CD4-positive, alpha-beta memory T cell (primary cell): ENCODE measurements at regions of chr4 and their contacts with region 1.

Region 1: DNA sequence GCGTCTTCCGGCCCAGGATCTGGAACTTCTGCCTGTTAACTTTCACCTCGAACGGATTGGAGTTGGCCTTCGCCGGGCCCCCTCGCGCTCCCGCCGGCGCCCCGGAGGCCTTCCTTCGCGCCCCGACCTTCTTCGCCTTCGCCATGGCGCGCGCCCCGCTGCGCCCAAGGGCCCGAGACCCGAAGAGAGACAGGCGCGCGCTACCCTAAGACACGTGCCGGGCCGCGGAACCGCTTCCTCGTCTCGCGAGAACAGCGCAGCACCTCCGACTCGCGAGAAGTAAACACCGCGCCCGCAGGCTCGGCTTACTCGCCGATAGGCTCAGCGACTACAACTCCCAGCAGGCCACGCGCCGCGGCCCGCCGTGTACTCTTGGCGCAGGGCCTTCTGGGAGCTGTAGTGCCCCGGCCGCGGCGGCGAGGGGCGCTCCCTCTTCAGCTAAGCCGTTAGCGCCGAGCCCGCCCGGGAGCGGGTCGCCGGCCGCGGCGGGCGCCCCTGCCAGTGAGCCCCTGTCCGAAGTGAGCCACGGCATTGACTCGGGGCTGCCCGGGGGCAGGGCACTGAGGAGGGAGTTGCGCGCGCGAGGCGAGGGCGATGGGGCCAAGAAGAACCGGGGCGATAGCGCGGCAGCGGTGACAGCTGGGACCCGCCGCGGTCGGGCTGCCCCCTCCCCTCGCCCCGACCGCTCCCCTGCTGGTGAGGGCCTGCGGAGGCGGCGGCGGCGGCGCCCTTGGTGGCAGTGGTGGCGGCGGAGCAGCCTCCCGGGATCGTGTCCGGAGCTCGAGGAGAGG is at the starts of genes GRK4 and NOP14:
- DNase-seq: peak; percentile 95 to 98 (median 98)
- H3K4me3 ChIP-seq: peak within 1 kb of the TSS; percentile 39 to 68
- H3K4me3 Mint-ChIP-seq: peak within 1 kb of the TSS; percentile 78 to 93 (median 91)
- H3K27ac ChIP-seq: peak within 1 kb of the TSS; percentile 83
- H3K27ac Mint-ChIP-seq: peak within 1 kb of the TSS; percentile 91 to 95 (median 93)
- H3K4me1 ChIP-seq: peaks cover 42% of the 10 kb centered on the region
- H3K4me1 Mint-ChIP-seq: peaks cover 28 to 54% (median 36%) of the 10 kb centered on the region in 4 donors
- H3K27me3 ChIP-seq: no peaks in the 10 kb centered on the region
- H3K27me3 Mint-ChIP-seq: no peaks in the 10 kb centered on the region
- total RNA-seq, gene GRK4: 2.8 to 3.2 TPM
- total RNA-seq, gene NOP14: 41.3 to 41.4 TPM

Region 2: GRCh38 chr4:1712216-1713002 is 1251.0 kb before region 1 on chr4 and contains the start of gene SLBP:
- CTCF ChIA-PET with region 1: no interaction called
- POLR2A ChIA-PET with region 1: no interaction called
- intact Hi-C with region 1: loop called (anchors 5 kb)
- DNase-seq: peak; percentile 98 to 99 (median 99)
- H3K4me3 ChIP-seq: peak within 1 kb of the TSS; percentile 62 to 99
- H3K4me3 Mint-ChIP-seq: peak within 1 kb of the TSS; percentile 95 to 99 (median 98)
- H3K27ac ChIP-seq: peak within 1 kb of the TSS; percentile 92
- H3K27ac Mint-ChIP-seq: peak within 1 kb of the TSS; percentile 95 to 98 (median 97)
- H3K4me1 ChIP-seq: peaks cover 67% of the 10 kb centered on the region
- H3K4me1 Mint-ChIP-seq: peaks cover 31 to 74% (median 53%) of the 10 kb centered on the region in 4 donors
- H3K27me3 ChIP-seq: no peaks in the 10 kb centered on the region
- H3K27me3 Mint-ChIP-seq: no peaks in the 10 kb centered on the region
- total RNA-seq, gene SLBP: 41.8 to 47.4 TPM

Region 3: DNA sequence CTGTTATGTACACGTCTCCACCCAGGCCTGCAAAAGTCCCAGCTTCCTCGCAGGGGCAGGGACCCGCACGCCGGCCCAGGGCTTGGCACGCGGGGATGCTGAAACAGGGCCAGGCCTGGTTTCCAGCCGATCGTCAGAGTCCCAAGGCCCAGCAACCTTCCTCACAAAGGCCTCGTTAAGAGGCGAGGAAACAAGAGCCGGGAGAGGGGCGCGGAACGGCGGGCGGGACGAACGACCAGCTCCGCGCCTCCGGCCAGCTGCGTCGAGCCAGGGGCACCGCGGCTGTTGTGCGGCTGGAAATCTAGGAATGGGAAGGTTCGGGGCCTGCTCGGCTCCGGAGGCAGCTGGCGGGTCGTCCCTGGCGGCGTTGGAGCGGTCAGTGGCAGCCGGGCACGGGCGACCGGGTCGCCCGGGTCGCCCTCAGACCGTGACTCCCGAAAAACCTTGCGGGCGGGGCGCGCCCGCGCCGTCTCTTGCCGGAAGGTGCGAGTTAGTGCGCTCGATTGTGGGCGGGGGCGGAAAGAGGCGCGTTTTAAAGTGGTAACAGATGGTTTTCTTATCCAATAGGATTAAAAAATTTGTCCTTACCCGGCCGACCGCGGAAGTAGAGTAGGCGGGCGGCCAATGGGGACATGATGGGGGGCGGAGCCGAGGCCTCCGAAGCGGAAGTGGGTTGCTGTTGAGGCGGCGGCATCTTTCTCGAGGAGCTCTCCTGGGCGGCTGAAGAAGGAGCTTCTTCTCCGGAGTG is 494.8 kb before region 1 on chr4 and contains the start of gene RNF4:
- CTCF ChIA-PET with region 1: no interaction called
- POLR2A ChIA-PET with region 1: interaction called, 6 read pairs
- intact Hi-C with region 1: loop called (anchors 2 kb)
- DNase-seq: peak; percentile 94 to 98 (median 97)
- H3K4me3 ChIP-seq: peak within 1 kb of the TSS; percentile 67 to 84
- H3K4me3 Mint-ChIP-seq: peak within 1 kb of the TSS; percentile 95 to 98 (median 95)
- H3K27ac ChIP-seq: peak within 1 kb of the TSS; percentile 98
- H3K27ac Mint-ChIP-seq: peak within 1 kb of the TSS; percentile 96 to 99 (median 98)
- H3K4me1 ChIP-seq: peaks cover 52% of the 10 kb centered on the region
- H3K4me1 Mint-ChIP-seq: peaks cover 28 to 62% (median 41%) of the 10 kb centered on the region in 4 donors
- H3K27me3 ChIP-seq: no peaks in the 10 kb centered on the region
- H3K27me3 Mint-ChIP-seq: no peaks in the 10 kb centered on the region
- total RNA-seq, gene RNF4: 94.0 to 104 TPM

Region 4: GRCh38 chr4:2702361-2702760 is 261.0 kb before region 1 on chr4:
- CTCF ChIA-PET with region 1: no interaction called
- POLR2A ChIA-PET with region 1: no interaction called
- intact Hi-C with region 1: no loop called
- DNase-seq: no peak
- H3K4me3 ChIP-seq: no peak overlapping the region
- H3K4me3 Mint-ChIP-seq: no peak overlapping the region
- H3K27ac ChIP-seq: no peak overlapping the region
- H3K27ac Mint-ChIP-seq: peak overlapping the region in 2 of 7 donors; percentile 26 to 30
- H3K4me1 ChIP-seq: no peaks in the 10 kb centered on the region
- H3K4me1 Mint-ChIP-seq: no peaks in the 10 kb centered on the region
- H3K27me3 ChIP-seq: no peaks in the 10 kb centered on the region
- H3K27me3 Mint-ChIP-seq: no peaks in the 10 kb centered on the region

Region 5: DNA sequence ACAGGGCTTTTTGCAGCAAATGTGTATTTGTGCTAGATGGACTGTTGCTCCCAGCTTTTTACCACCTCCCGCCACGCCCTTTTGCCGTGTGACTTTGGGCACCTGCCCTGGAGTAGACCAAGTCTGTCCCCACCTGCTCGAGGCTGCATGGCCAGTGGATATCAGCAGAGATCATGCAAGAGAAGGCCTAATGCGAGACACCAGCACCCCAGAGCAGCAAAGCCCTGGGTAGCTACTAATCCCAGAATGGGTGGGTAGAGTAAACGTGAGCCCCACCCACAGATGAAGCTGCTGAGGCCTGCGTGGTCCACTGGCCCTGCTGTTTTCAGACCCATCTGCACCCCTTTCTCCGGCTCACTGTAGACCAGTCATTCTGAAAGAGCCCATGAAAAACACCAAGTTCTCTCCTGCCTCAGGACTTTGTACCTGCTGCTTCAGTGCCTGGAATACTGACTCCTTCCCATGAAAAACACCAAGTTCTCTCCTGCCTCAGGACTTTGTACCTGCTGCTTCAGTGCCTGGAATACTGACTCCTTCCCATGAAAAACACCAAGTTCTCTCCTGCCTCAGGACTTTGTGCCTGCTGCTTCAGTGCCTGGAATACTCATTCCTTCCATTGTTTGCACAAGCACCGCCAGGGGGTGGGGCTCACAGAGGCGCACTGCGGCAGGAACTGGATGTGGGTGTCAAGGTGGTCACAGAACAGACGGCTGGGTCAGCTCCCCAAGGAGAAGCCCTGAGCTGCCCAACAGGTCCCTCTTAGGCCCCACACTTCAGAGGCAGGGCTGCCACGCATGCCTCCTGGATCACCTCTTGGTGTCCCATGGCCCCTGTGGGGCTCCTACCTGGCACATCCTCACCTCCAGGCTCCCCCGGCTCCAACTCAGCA is 202.1 kb before region 1 on chr4:
- CTCF ChIA-PET with region 1: interaction called, 12 read pairs
- POLR2A ChIA-PET with region 1: interaction called, 7 read pairs
- intact Hi-C with region 1: loop called (anchors 2 kb)
- DNase-seq: no peak
- H3K4me3 ChIP-seq: no peak overlapping the region
- H3K4me3 Mint-ChIP-seq: peak overlapping the region in 1 of 8 donors; percentile 17
- H3K27ac ChIP-seq: no peak overlapping the region
- H3K27ac Mint-ChIP-seq: peak overlapping the region in 3 of 7 donors; percentile 37 to 80 (median 60)
- H3K4me1 ChIP-seq: peaks cover 14% of the 10 kb centered on the region
- H3K4me1 Mint-ChIP-seq: peaks cover 0 to 21% (median 9%) of the 10 kb centered on the region in 4 donors
- H3K27me3 ChIP-seq: no peaks in the 10 kb centered on the region
- H3K27me3 Mint-ChIP-seq: no peaks in the 10 kb centered on the region

Region 6: DNA sequence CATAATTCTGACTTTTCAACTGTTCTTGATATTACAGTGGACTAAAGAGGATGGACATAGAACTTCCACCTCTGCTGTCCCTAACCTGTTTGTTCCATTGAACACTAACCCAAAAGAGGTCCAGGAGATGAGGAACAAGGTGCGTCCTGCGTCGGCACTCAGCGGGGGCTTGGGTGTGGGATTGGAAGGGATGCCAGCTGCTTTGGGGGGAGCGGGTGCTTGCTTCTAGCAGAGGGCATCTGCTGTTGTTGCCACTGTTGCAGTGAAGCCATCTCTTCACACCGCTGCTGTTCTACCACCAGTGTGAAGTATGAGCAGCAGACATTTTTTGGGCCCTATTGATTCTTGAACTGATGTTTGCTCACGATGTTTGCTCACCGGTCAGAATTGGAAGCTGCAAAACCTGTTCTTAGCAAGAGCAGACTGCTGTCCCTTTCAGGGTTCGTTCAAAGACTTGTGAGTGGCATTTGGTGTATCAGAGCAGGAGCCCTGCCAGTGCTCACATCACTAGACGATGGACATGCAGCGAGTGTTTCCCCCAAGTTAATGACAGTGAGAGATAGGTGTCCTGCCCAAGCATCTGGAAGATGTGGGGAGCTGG is 55.6 kb before region 1 on chr4:
- CTCF ChIA-PET with region 1: no interaction called
- POLR2A ChIA-PET with region 1: no interaction called
- intact Hi-C with region 1: no loop called
- DNase-seq: no peak
- H3K4me3 ChIP-seq: no peak overlapping the region
- H3K4me3 Mint-ChIP-seq: no peak overlapping the region
- H3K27ac ChIP-seq: no peak overlapping the region
- H3K27ac Mint-ChIP-seq: peak overlapping the region in 4 of 7 donors; percentile 22 to 87 (median 68)
- H3K4me1 ChIP-seq: peaks cover 23% of the 10 kb centered on the region
- H3K4me1 Mint-ChIP-seq: peaks cover 12 to 30% (median 16%) of the 10 kb centered on the region in 4 donors
- H3K27me3 ChIP-seq: no peaks in the 10 kb centered on the region
- H3K27me3 Mint-ChIP-seq: no peaks in the 10 kb centered on the region

Region 7: DNA sequence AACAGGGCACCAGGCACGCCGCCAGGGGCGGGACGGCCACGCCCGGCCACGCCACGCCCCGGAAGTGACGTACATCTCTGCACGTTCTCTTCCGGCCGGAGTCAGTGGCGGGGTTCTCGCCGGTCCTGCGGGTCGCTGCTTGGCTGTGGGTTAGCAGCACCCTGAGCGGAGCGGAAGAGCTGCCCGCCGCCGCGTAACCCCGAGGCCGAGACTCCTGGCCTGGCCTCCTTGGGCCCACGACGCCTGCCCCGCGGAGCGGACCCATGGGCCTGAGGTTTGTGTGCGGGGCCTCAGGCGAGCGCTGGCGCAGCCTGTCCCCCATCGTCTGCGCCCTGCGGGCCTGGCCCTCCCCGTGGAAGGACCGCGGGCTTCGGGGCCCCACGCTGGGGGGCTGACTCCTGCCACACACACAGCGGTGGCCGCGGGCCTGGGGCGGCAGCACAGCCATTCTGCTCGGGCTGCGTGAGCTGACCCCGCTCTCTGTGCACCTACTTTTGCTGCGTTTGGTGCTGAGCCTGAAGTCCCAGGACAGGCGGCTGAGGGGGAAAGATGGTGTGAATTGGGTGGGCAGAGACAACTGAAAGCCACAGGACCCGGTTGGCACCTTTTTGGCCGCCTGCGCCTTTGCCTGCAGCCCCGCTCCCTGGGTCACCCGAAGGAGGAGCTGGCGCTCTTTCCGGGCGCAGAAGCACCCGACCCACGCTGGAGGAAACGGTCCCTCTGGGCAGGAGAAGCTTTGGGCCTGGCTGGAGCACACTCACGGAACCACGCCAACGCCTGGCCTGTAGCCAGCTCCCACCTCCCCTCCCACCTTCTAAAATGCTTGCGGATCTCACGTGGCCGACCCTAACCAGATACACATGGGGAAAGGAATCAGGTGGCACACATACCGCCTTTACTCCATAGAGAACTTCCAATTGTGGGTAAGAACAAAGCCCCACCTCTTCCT is 28.3 kb before region 1 on chr4:
- CTCF ChIA-PET with region 1: interaction called, 3 read pairs
- POLR2A ChIA-PET with region 1: interaction called, 82 read pairs
- intact Hi-C with region 1: loop called (anchors 1 kb)
- DNase-seq: peak; percentile 91 to 96 (median 94)
- H3K4me3 ChIP-seq: peak overlapping the region; percentile 91 to 92
- H3K4me3 Mint-ChIP-seq: peak overlapping the region; percentile 88 to 92 (median 89)
- H3K27ac ChIP-seq: peak overlapping the region; percentile 97
- H3K27ac Mint-ChIP-seq: peak overlapping the region; percentile 91 to 99 (median 95)
- H3K4me1 ChIP-seq: peaks cover 56% of the 10 kb centered on the region
- H3K4me1 Mint-ChIP-seq: peaks cover 35 to 62% (median 45%) of the 10 kb centered on the region in 4 donors
- H3K27me3 ChIP-seq: no peaks in the 10 kb centered on the region
- H3K27me3 Mint-ChIP-seq: no peaks in the 10 kb centered on the region

Region 8: DNA sequence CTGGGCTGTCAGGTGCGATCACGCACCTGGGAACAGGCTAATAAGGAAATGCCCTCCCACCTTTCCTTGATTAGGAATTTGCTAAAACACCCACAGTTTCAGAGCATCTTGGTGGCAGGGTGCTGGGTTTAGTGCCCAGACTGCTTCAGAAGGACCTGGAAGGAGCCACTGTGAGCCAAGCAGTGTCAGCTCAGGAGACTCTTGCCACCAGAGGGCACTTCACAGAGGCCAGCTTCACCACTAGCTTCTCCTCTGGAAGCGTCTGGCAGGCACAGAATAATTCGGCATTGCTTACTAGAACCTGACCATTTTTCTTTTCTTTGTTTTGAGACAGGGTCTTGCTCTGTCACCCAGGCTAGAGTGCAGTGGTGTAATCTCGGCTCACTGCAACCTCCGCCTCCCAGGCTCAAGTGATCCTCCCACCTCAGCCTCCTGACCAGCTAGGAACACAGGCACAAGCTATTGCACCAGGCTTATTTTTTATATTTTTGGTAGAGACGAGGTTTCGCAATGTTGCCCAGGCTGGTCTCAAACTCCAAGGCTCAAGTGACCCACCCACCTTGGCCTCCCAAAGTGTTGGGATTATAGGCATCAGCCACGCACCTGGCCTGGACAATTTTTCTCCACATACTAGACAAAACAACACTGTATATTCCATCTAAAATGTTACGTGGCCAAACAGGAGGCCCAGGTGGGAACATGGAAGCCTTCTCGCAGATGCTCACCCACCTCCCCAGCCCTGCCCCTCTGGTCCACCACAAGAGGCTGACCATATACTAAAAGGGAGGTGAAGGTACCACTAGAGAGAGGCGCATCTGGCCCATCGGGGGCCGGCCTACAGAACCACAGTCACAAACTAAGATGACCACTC is 14.2 kb before region 1 on chr4:
- CTCF ChIA-PET with region 1: interaction called, 28 read pairs
- POLR2A ChIA-PET with region 1: interaction called, 20 read pairs
- intact Hi-C with region 1: loop called (anchors 2 kb)
- DNase-seq: no peak
- H3K4me3 ChIP-seq: no peak overlapping the region
- H3K4me3 Mint-ChIP-seq: no peak overlapping the region
- H3K27ac ChIP-seq: no peak overlapping the region
- H3K27ac Mint-ChIP-seq: peak overlapping the region in 1 of 7 donors; percentile 30
- H3K4me1 ChIP-seq: no peaks in the 10 kb centered on the region
- H3K4me1 Mint-ChIP-seq: peaks cover 2 to 5% (median 4%) of the 10 kb centered on the region in 4 donors
- H3K27me3 ChIP-seq: no peaks in the 10 kb centered on the region
- H3K27me3 Mint-ChIP-seq: no peaks in the 10 kb centered on the region

Region 9: GRCh38 chr4:3047464-3048286 is 84.3 kb after region 1 on chr4:
- CTCF ChIA-PET with region 1: no interaction called
- POLR2A ChIA-PET with region 1: no interaction called
- intact Hi-C with region 1: loop called (anchors 5 kb)
- DNase-seq: peak; percentile 76 to 93 (median 82)
- H3K4me3 ChIP-seq: peak overlapping the region; percentile 42 to 87
- H3K4me3 Mint-ChIP-seq: peak overlapping the region; percentile 81 to 93 (median 88)
- H3K27ac ChIP-seq: peak overlapping the region; percentile 56
- H3K27ac Mint-ChIP-seq: peak overlapping the region; percentile 82 to 98 (median 94)
- H3K4me1 ChIP-seq: peaks cover 27% of the 10 kb centered on the region
- H3K4me1 Mint-ChIP-seq: peaks cover 20 to 42% (median 24%) of the 10 kb centered on the region in 4 donors
- H3K27me3 ChIP-seq: no peaks in the 10 kb centered on the region
- H3K27me3 Mint-ChIP-seq: no peaks in the 10 kb centered on the region